Activated naive CD4-positive, alpha-beta T cell treated with anti-CD3 and anti-CD28 coated beads, Interleukin-2, amount 10 ng/mL, durations not matched to agents 7 days and 5 days (primary cell): ENCODE measurements at regions of chr14 and their contacts with region 1.

Region 1: GRCh38 chr14:58166005-58166983 is 14.3 kb upstream of the ARMH4 start:
- DNase-seq: peak; percentile 83
- H3K4me3 Mint-ChIP-seq: no peak overlapping the region
- H3K27ac Mint-ChIP-seq: no peak overlapping the region
- H3K4me1 Mint-ChIP-seq: peaks cover 7% of the 10 kb centered on the region
- H3K27me3 Mint-ChIP-seq: peaks cover 17% of the 10 kb centered on the region

Region 2: GRCh38 chr14:58107947-58108552 is 58.2 kb before region 1 on chr14:
- CTCF ChIA-PET with region 1: interaction called, 53 read pairs
- DNase-seq: peak; percentile 54
- H3K4me3 Mint-ChIP-seq: no peak overlapping the region
- H3K27ac Mint-ChIP-seq: no peak overlapping the region
- H3K4me1 Mint-ChIP-seq: no peaks in the 10 kb centered on the region
- H3K27me3 Mint-ChIP-seq: peaks cover 14% of the 10 kb centered on the region

Region 3: DNA sequence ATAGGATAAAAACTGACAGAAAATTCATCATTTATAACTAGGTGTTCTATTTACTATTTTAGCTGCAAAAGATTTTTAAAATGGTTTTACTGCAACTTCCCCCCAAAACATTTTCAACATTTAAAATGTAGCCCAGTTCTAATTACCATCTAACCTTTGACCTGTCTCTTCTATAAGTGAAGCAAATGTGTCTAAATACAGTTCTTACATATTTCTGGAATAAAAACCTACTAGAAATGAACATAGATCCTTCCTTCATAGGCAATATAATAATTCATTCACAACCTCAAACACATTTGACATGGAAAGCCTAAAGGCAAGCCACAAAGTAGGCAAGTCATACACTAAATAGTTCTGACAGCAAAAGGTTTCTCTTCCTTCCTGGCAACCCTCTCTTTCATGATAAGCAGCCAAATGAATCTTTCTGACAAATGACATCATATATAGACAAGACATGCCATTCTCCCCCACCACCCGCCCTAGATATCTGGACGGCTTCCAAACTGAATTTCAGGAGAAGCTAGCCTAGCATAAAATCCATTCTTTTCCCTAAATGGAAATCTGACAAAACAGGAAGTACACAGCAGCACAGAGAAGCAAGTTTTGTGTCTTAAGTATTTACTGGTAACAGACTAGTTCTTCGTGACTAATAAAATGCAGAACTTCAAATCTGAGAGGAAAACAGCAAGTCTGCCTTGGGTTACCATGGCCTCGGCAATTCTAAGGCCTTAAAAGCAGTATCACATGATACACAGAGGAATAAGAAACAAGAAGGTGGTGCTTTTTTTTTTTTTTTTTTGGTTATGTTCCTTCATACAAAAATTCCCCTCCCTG is 114.9 kb after region 1 on chr14:
- CTCF ChIA-PET with region 1: no interaction called
- DNase-seq: no peak
- H3K4me3 Mint-ChIP-seq: peak overlapping the region; percentile 30
- H3K27ac Mint-ChIP-seq: peak overlapping the region; percentile 88
- H3K4me1 Mint-ChIP-seq: peaks cover 54% of the 10 kb centered on the region
- H3K27me3 Mint-ChIP-seq: no peaks in the 10 kb centered on the region